Vagina (tissue), 2 donors: ENCODE measurements at regions of chr7 and their contacts with region 1.

Region 1: DNA sequence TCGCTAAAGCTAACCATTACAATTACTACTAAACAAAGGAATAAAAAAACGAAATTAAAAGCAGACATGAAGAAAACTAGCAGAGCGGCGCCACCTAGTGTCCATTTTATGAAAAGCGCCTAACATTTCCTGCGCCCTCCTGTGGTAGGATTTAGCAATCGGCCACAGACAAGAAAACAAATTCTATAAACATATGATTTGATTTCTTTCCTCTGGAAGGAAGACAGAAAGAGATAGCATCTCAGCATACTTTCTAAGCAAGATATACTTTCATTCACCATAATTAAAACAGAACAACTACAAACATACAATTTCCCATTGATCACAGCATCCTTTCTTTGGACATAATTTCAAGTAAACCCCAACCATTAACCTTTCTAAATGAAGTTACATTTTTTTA is 337.7 kb upstream of the NPVF start:
- DNase-seq: no peak
- H3K4me3 ChIP-seq: no peak overlapping the region
- H3K27ac ChIP-seq: no peak overlapping the region
- H3K4me1 ChIP-seq: no peaks in the 10 kb centered on the region
- H3K27me3 ChIP-seq: no peaks in the 10 kb centered on the region
- CTCF ChIP-seq: peak; percentile 96 to 99 (median 99)
- POLR2A ChIP-seq: no peak

Region 2: GRCh38 chr7:25389489-25390106 is 176.4 kb before region 1 on chr7:
- intact Hi-C with region 1: loop called (anchors 5 kb)
- DNase-seq: no peak
- H3K4me3 ChIP-seq: no peak overlapping the region
- H3K27ac ChIP-seq: no peak overlapping the region
- H3K4me1 ChIP-seq: peaks cover 21% of the 10 kb centered on the region
- H3K27me3 ChIP-seq: no peaks in the 10 kb centered on the region
- CTCF ChIP-seq: peak in 1 of 3 experiments; percentile 46
- POLR2A ChIP-seq: no peak

Region 3: DNA sequence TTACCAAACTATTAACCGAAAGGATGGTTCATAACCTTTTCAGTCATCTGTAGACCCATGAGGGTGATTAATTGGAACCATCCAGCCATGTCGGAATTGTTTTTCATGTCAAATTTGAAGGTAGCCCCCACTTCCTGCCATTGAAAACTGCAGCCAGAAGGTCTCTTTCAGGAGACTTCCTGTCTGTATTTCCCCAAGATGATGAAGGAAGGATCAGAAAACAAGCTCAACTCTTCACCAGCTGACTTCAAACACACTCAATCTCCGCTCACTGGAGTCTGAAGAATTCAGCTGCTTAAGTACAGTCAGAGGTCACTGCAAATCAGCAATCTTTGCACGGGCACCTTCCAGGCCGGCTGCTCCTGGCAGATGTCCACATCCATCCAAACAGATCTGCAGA is 45.9 kb before region 1 on chr7:
- intact Hi-C with region 1: no loop called
- DNase-seq: no peak
- H3K4me3 ChIP-seq: no peak overlapping the region
- H3K27ac ChIP-seq: no peak overlapping the region
- H3K4me1 ChIP-seq: no peaks in the 10 kb centered on the region
- H3K27me3 ChIP-seq: no peaks in the 10 kb centered on the region
- CTCF ChIP-seq: no peak
- POLR2A ChIP-seq: no peak

Region 4: GRCh38 chr7:25686493-25686892 is 120.5 kb after region 1 on chr7:
- intact Hi-C with region 1: no loop called
- DNase-seq: no peak
- H3K4me3 ChIP-seq: no peak overlapping the region
- H3K27ac ChIP-seq: no peak overlapping the region
- H3K4me1 ChIP-seq: no peaks in the 10 kb centered on the region
- H3K27me3 ChIP-seq: no peaks in the 10 kb centered on the region
- CTCF ChIP-seq: no peak
- POLR2A ChIP-seq: no peak